PC-9 (cell line): ENCODE measurements at regions of chr6 and their contacts with region 1.

Region 1: DNA sequence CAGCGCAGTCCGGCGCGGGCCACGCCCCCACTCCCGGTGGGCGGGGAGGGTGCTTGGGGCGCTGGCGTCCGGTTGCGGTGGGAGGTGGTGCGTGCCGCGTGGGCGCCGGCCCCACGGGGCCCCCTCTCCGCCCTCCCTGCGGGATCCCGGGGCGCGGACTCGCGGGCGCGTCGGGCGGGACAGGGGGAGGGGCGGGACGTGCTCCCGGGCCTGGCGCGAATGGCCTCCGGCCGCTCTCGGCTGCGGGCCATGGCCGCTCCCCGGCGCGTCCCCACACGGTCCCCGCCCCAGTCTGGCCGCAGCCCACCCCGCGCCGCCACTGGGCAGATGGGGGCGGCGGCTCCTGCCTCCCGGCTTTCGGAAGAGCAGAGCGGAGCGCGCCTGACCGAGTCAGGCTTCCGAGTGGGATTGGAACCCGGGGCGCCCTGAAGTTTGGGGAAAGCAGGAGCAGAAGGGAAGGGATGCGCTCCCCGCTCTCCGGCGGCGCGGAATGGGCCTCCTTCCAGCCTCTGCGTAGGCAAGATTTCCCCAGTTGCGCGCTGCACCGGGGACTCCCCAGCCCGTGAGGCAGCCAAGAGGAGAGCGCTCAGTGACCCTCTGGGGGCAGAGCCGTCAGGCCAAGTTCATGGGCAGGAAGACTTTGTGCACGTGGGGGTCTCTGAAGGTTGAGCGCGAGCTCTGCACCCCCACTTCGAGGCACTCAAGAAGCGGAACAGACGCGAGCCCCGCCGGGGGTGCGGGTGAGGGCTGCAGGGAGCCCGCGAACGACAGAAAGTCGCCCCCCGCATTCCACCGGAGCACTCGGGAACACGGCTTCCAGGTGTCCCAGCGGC is 565 bp upstream of the PPP1R3G start:
- DNase-seq: peak in 1 of 2 experiments; percentile 41
- H3K4me3 ChIP-seq: peak overlapping the region; percentile 76
- H3K27ac ChIP-seq: no peak overlapping the region
- H3K4me1 ChIP-seq: peaks cover 16% of the 10 kb centered on the region
- H3K27me3 ChIP-seq: no peaks in the 10 kb centered on the region
- CTCF ChIP-seq: no peak

Region 2: DNA sequence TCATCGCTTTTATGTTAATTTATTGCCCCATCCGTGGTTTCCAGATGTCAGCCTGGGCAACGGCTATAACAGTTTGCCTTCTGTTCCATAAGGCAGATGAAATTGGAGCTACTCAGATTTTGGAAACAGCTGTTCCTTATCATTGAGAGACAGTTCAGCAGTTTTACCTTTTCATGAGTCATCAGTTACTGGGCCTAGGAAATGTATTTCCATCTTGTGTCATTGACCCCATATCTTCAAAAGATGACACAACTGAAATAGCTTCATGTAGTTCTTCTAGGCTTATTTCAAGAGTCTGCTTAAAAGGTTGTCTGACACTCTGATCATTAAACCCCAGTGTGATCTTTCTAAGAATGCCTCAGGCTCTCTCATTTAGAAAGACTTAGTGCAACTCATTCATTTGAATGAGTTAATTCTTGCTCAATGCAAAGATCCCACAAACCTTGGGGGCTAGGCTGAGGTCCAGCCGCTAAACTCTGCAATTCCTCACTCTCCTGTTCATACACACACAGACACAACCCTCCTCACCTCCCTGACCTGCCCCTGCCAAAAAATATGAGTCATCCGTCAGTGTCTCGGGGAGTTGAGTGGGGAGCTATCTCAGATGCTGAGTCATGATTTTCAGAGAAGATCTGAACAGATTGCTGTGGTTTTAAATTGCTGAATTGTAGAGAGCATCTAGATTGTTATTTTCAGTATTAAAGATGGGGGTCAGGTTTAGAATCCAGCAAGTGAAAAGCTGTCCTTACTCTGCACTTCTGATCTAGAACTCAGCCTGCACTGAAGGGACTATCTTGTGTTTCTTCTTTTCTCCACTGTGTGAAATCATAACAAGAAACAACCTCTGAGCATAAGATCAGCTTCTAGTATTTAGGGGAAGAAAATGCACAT is 142.5 kb before region 1 on chr6:
- CTCF ChIA-PET with region 1: no interaction called
- POLR2A ChIA-PET with region 1: interaction called, 4 read pairs
- intact Hi-C with region 1: loop called (anchors 5 kb)
- DNase-seq: peak; percentile 80 to 89
- H3K4me3 ChIP-seq: no peak overlapping the region
- H3K27ac ChIP-seq: peak overlapping the region; percentile 66
- H3K4me1 ChIP-seq: peaks cover 32% of the 10 kb centered on the region
- H3K27me3 ChIP-seq: no peaks in the 10 kb centered on the region
- CTCF ChIP-seq: no peak

Region 3: DNA sequence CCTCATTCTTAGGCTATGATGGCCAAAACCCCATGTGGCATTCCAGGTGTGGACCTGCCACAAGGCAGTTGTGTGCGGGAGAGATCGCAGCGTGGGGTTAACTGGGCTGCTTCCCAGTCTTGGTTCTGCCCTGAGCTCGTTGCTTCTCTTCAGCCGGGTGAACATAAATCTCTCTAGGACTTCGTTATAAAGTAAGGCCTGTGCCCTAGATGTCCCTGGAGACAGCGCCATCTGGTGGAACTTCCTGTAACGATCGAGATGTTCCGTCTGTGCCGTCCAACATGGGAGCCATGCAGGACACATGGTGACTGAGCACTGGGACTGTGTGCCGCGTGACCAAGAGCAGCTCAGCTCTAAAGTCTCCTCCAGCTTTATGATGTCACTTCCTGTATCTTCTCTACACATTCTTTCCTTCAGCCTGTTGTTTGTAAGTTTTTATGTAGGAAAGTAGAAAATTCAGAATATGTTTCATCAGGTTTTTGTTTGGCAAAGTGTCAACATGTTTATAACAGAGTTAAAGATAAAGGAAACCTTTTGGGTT is 53.9 kb before region 1 on chr6:
- CTCF ChIA-PET with region 1: interaction called, 5 read pairs
- POLR2A ChIA-PET with region 1: no interaction called
- intact Hi-C with region 1: loop called (anchors 1 kb)
- DNase-seq: peak in 1 of 2 experiments; percentile 70
- H3K4me3 ChIP-seq: no peak overlapping the region
- H3K27ac ChIP-seq: no peak overlapping the region
- H3K4me1 ChIP-seq: peaks cover 11% of the 10 kb centered on the region; the same call in 1 of the 2 replicates
- H3K27me3 ChIP-seq: no peaks in the 10 kb centered on the region
- CTCF ChIP-seq: peak; percentile 40; the same call in 1 of the 2 replicates

Region 4: DNA sequence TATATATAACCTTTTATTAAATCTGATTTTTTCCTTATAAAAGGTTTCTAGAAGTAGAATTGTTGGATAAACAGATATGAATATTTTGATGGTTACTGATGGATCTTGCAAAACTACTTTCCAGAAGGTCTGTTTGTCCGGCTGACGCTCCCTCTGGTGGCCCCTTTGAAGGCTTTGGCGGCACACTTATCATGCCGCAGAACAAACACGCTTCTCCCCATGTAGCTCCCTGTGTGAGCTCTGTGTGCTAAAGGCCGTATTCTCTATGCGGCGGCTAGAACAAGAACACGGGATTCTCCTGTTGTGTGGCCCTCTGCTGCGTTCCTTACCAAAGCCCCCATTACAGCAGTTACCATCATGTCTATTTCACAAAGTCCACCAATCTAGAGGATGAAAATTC is 30.6 kb after region 1 on chr6:
- CTCF ChIA-PET with region 1: no interaction called
- POLR2A ChIA-PET with region 1: no interaction called
- intact Hi-C with region 1: no loop called
- DNase-seq: no peak
- H3K4me3 ChIP-seq: no peak overlapping the region
- H3K27ac ChIP-seq: no peak overlapping the region
- H3K4me1 ChIP-seq: no peaks in the 10 kb centered on the region
- H3K27me3 ChIP-seq: no peaks in the 10 kb centered on the region
- CTCF ChIP-seq: no peak

Region 5: DNA sequence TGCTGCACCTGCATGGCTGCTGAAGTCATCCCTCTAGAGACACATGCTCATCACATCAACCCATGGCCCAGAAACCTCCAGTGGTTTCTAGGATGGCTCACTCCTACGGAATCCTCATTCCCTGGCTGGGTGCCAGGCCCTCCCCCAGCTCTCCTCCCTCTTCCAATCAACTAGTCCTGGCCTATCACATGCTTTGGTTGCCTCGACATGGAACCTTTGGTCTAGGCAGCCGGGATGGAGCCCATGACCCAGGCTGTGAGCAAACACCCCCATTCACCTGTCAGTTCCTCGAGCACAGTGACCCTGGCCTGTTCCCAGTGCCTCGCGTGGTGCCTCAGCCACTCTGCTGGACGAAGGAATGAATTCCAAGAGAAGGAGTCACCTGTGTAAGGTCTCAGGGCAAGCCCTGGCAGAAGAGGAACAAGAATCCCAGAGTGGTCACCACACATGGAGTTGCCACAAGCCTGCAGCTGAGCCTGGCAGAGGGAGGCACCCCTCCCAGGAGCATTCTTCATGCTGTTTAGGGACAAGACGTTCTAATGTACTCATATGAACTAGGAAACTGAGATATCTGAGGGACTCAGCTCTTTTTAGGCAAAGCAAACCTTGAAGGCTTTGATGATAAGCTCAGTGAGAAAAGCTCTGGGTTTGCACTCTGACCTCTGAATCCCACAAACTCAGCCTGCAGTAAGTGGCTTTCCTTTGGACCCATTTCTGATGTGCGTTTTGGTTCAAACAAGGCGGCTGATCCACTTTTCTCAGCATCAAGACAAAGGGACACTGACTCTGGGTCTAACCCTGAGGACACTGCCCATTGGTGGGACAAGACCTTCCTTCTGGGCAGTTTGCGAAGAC is 40.8 kb after region 1 on chr6:
- CTCF ChIA-PET with region 1: no interaction called
- POLR2A ChIA-PET with region 1: no interaction called
- intact Hi-C with region 1: loop called (anchors 1 kb)
- DNase-seq: peak; percentile 76 to 80
- H3K4me3 ChIP-seq: no peak overlapping the region
- H3K27ac ChIP-seq: no peak overlapping the region
- H3K4me1 ChIP-seq: peaks cover 18% of the 10 kb centered on the region
- H3K27me3 ChIP-seq: no peaks in the 10 kb centered on the region
- CTCF ChIP-seq: no peak

Region 6: DNA sequence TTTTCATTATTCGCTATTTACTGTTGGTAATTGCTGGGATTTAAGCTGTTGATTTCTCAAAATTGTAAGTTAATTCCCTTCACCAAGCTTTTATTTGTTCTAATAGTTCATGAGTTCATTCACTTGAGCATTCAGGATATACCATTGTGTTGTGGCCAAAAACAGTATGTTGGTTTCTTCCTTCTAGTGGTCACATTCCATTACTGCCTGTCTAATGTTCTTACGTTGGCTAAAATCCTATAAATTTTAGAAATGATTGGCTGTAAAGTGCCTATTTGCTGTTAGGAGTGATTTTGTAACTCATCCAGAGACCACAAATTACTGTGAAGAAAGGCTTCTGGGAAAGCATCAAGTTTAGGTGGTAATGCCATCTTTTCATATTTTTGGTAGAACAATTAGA is 253.0 kb after region 1 on chr6:
- CTCF ChIA-PET with region 1: no interaction called
- POLR2A ChIA-PET with region 1: no interaction called
- intact Hi-C with region 1: no loop called
- DNase-seq: no peak
- H3K4me3 ChIP-seq: no peak overlapping the region
- H3K27ac ChIP-seq: no peak overlapping the region
- H3K4me1 ChIP-seq: no peaks in the 10 kb centered on the region
- H3K27me3 ChIP-seq: no peaks in the 10 kb centered on the region
- CTCF ChIP-seq: no peak